ENCODE measurements at regions of chr6 and their contacts with region 1.

Region 1: DNA sequence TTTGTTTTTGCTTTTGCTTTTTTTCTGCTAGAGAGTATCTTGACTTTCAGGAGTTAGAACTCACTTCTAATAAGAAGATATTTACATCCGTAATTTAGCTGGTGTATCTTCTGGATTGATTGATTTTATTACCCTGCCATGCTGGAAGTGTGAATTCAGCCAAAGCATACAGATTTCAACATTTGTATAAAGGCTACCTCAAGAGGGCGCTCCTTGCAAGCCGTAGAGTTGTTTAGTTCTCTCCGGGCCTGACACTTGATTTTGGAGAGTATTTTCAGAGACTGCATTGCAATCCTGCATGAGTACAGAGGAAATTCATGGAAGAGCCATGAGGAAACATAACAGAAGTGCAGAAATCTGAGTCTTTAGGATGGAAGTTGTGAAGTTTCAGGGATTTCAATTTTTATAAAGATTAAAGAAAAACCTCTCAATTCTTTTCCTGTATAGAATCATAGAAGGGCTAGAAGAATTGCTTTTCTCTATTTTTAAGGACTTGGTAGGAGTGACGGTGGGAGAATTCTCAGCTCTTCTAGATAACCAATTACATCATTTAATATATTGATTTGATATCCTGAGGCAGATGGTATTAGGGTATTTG is 66.7 kb upstream of the TIAM2 start:
- H3K4me3 ChIP-seq: no peak overlapping the region
- H3K27ac ChIP-seq: no peak overlapping the region
- H3K4me1 ChIP-seq: peaks cover 6% of the 10 kb centered on the region; the same call in 1 of the 2 replicates
- CTCF ChIP-seq: peak; percentile 60

Region 2: DNA sequence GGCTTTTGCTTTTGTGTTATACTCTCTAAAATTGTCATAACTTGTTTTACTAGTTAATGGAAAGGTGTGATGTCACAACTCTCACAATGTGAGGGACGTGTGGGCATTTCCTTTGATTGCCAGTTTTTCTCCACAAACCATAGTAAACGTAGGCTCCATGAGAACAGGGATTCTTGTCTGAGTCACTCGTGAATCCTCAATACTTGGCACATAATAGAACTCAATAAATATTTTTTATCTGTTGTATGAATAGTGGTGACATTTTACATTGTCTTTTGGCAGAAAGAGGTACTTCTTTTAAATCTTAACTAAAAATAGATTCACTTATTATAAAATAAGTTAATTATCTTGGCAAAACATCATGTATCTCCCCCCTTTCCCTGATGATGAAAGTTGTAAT is 348.9 kb before region 1 on chr6:
- CTCF ChIA-PET with region 1: no interaction called
- POLR2A ChIA-PET with region 1: no interaction called
- H3K4me3 ChIP-seq: no peak overlapping the region
- H3K27ac ChIP-seq: no peak overlapping the region
- H3K4me1 ChIP-seq: no peaks in the 10 kb centered on the region
- CTCF ChIP-seq: no peak

Region 3: GRCh38 chr6:154899824-154900463 is 28.5 kb before region 1 on chr6:
- CTCF ChIA-PET with region 1: interaction called, 13 read pairs
- POLR2A ChIA-PET with region 1: no interaction called
- H3K4me3 ChIP-seq: no peak overlapping the region
- H3K27ac ChIP-seq: no peak overlapping the region
- H3K4me1 ChIP-seq: no peaks in the 10 kb centered on the region
- CTCF ChIP-seq: no peak

Region 4: DNA sequence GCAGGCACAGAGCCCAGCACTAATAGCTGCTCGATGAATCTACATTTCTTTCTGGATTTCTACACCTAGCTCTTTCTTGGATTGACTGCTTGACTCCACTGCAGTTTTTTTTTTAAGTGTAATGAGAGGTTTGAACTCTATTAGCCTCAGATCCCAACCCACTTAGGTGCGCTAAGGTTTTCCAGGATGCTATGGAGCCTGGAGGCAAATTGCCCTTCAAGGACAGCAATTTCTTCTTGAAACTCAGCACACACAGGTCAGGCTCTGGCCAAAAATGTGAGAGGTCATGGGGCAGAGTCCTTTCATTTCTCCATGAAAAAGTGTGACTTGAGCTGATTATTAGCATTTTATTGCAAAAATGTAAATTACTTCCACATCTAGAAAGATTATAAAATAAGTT is 14.4 kb after region 1 on chr6:
- CTCF ChIA-PET with region 1: interaction called, 12 read pairs
- POLR2A ChIA-PET with region 1: no interaction called
- H3K4me3 ChIP-seq: no peak overlapping the region
- H3K27ac ChIP-seq: no peak overlapping the region
- H3K4me1 ChIP-seq: 0 out of 2 replicates have a peak, but pooled peaks cover 2% of the 10 kb centered on the region
- CTCF ChIP-seq: no peak